Esophagus squamous epithelium (tissue), 5 donors: ENCODE measurements at regions of chr11 and their contacts with region 1.

Region 1: GRCh38 chr11:101848262-101848661 is 66.5 kb upstream of the CEP126 start:
- DNase-seq: no peak
- H3K4me3 ChIP-seq: no peak overlapping the region
- H3K27ac ChIP-seq: no peak overlapping the region
- H3K4me1 ChIP-seq: no peaks in the 10 kb centered on the region
- H3K27me3 ChIP-seq: no peaks in the 10 kb centered on the region
- CTCF ChIP-seq: peak in 4 of 6 experiments; percentile 38 to 63 (median 56)
- POLR2A ChIP-seq: no peak

Region 2: DNA sequence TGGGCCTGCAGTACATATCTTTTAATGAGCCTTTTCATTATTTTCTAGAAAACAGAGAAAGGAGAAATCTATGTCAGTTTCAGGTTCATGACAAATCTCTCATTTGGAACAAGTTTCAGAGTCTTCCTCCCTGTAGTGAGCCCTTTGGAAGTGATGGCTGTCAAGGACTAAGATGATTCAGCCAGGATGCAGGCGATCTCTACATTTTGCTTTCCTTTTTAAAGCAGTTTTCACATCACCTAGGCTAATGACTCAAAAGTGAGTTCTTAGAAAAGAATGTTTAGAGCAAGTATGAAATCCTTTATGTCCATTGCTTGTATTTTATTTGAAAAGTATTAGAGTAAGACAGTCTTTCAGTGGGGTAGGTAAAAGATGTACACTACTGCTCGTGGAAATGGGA is 394.6 kb before region 1 on chr11:
- intact Hi-C with region 1: loop called (anchors 5 kb)
- DNase-seq: no peak
- H3K4me3 ChIP-seq: no peak overlapping the region
- H3K27ac ChIP-seq: no peak overlapping the region
- H3K4me1 ChIP-seq: no peaks in the 10 kb centered on the region
- H3K27me3 ChIP-seq: no peaks in the 10 kb centered on the region
- CTCF ChIP-seq: no peak
- POLR2A ChIP-seq: no peak